Ascending aorta (tissue), 2 donors: ENCODE measurements at regions of chr1 and their contacts with region 1.

Region 1: GRCh38 chr1:225817611-225818061 is 7.7 kb downstream of the EPHX1 start:
- DNase-seq: peak; percentile 84 to 96
- H3K4me3 ChIP-seq: peak overlapping the region in 1 of 2 donors; percentile 37
- H3K27ac ChIP-seq: peak overlapping the region; percentile 89 to 90
- H3K4me1 ChIP-seq: peaks cover 38 to 62% of the 10 kb centered on the region in 2 donors
- H3K27me3 ChIP-seq: no peaks in the 10 kb centered on the region
- CTCF ChIP-seq: no peak

Region 2: GRCh38 chr1:225691861-225692516 is 125.6 kb before region 1 on chr1:
- intact Hi-C with region 1: loop called (anchors 5 kb)
- DNase-seq: peak in 1 of 2 donors; percentile 50
- H3K4me3 ChIP-seq: no peak overlapping the region
- H3K27ac ChIP-seq: peak overlapping the region; percentile 79
- H3K4me1 ChIP-seq: peaks cover 16 to 56% of the 10 kb centered on the region in 2 donors
- H3K27me3 ChIP-seq: no peaks in the 10 kb centered on the region
- CTCF ChIP-seq: no peak

Region 3: DNA sequence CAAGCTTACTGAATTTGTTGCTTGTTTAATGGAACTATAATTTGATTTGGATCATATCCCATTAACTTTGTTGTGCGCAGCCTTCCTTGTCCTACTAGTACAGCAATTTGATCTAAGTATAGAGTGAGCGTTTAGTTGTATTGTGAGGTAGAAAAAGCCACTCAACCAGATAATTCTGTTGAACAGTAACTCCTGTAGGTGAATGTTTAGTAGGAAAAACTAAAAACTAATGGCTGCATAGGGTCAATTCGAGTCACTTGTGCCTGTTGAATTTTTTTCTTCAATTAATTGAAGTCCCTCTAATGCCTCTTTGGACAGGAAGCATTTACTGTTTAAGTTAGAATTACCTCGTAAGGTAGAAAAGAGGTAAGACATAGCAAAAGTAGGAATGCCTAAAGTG is 22.7 kb before region 1 on chr1:
- intact Hi-C with region 1: no loop called
- DNase-seq: no peak
- H3K4me3 ChIP-seq: no peak overlapping the region
- H3K27ac ChIP-seq: no peak overlapping the region
- H3K4me1 ChIP-seq: no peaks in the 10 kb centered on the region
- H3K27me3 ChIP-seq: no peaks in the 10 kb centered on the region
- CTCF ChIP-seq: no peak

Region 4: GRCh38 chr1:225834417-225835329 is 17.0 kb after region 1 on chr1:
- intact Hi-C with region 1: loop called (anchors 2 kb)
- DNase-seq: peak in 1 of 2 donors; percentile 91
- H3K4me3 ChIP-seq: no peak overlapping the region
- H3K27ac ChIP-seq: peak overlapping the region; percentile 68 to 78
- H3K4me1 ChIP-seq: peaks cover 6 to 18% of the 10 kb centered on the region in 2 donors
- H3K27me3 ChIP-seq: no peaks in the 10 kb centered on the region
- CTCF ChIP-seq: no peak

Region 5: DNA sequence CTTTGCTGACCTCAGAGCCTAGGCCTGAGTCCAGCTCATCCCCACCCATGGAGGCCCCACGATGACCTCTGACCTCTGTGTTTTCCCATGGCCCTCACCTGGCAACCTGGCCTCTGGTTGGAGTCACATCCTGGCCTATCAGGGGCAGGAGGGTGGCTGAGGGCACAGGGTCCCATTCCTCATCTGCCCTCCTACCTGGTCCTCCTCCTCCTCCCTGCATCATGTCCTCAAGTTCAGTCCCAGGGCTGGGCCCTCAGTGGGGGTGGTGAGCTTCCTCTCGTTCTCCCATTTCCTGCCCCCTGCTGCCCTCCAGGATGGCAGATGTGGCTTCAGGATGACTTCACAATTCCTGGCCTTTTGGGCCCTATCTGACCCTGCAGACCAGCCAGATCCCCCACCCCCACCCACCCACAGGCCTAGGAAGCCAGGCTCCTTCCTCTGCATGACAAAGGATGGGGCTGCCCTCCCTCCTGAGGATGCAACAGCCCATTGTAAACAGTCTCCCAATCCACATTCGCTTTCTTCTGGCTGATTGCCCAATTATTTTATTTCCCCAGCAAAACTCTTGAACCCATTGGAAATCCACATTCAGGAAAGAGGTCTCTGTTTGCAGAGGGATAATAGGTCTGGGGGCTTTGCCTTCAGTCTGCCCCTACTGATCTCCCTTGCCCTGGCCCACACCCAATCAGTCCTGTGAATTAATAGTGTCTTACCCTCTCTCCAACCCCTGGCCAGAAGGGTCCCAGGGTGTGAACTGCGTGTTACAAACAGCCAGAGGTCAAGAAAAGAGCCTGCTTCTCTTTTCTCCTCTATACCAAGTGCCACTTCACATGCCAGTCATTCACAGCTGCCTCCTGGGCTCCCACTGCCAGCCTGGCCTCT is 81.6 kb after region 1 on chr1:
- intact Hi-C with region 1: no loop called
- DNase-seq: no peak
- H3K4me3 ChIP-seq: no peak overlapping the region
- H3K27ac ChIP-seq: no peak overlapping the region
- H3K4me1 ChIP-seq: no peaks in the 10 kb centered on the region
- H3K27me3 ChIP-seq: no peaks in the 10 kb centered on the region
- CTCF ChIP-seq: no peak

Region 6: DNA sequence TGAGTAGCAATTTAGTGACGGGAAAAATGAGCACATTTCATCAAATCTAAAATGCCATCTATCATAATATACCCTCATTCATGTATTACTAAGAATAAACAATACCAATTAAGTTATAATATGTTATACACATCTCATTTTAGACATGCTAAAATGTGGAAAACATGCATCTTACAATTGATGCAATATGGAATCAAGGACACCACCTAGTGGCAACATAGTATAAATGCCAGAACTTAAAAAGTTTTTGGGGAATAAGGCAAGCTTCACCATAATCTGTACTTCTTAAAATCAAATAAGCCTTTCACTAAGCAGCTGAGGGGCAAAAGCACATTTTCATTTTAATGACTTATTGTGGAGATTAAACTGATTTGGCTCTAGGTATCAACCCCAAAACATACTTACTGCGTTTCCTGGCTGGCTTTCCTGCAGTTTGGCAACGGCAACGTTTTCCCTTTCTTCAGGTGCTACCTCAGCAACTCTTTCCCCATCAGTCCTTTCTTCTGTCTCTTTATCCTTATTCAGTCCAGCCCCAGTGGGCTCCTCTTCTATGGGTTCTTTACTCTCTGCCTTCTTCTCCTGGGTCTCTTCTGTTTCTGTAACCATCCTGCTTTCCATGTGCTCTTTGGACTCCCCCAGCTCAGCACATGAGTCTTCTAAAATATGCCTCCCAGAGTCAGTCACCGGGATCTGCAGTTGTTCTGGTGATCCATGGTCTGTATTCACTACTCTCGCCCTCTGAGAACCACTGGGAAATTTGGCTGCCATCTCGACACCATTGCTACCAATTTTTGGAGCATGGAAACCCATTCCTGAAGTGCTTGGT is 170.1 kb after region 1 on chr1:
- intact Hi-C with region 1: no loop called
- DNase-seq: no peak
- H3K4me3 ChIP-seq: no peak overlapping the region
- H3K27ac ChIP-seq: no peak overlapping the region
- H3K4me1 ChIP-seq: no peaks in the 10 kb centered on the region
- H3K27me3 ChIP-seq: no peaks in the 10 kb centered on the region
- CTCF ChIP-seq: peak; percentile 48 to 65 (median 59)